ENCODE measurements at regions of chr19 and their contacts with region 1.

Region 1: GRCh38 chr19:6801485-6802086 is 29.1 kb downstream of the VAV1 start:
- DNase-seq: peak; percentile 85
- H3K4me3 Mint-ChIP-seq: peak overlapping the region; percentile 81
- H3K27ac Mint-ChIP-seq: peak overlapping the region; percentile 99
- H3K4me1 Mint-ChIP-seq: peaks cover 33% of the 10 kb centered on the region
- H3K27me3 Mint-ChIP-seq: no peaks in the 10 kb centered on the region
- CTCF ChIP-seq: no peak

Region 2: DNA sequence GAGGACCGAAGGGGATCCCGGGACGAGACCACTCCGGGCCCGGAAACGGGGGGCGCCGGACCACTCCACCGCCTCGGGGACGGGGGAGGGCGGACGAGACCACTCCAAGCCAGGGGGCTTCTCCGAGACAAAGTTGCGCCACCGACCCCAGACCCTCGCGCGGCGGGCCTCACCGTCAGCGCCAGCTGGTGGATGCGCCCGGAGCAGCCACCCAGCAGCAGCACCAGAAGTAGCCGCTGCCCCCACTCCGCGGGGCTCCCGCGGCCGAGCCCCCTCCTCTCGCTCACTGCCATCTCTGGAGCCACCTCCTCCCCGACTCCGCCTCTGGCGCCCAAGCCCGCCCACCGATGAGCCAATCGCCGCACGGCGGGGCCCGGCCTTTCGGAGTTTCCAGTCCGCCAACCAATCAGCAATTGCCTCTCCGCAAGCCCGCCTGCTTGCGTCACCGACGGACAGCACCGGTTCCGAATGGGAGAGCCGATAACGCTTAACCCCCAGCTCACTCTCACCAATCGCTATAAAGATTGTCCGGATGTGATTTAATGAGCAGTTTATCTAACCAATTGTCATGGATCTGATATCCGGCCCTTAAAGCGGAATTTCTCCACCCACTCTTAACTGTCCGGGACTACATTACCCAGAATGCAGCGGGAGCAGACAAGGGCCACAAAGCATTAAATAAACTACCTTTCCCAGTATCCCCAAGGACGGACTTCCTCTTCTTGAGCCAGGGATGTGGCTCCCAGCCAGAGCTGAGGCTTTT is 64.1 kb before region 1 on chr19 and contains the start of gene GPR108:
- CTCF ChIA-PET with region 1: interaction called, 6 read pairs
- intact Hi-C with region 1: loop called (anchors 10 kb)
- DNase-seq: peak; percentile 98
- H3K4me3 Mint-ChIP-seq: peak within 1 kb of the TSS; percentile 88
- H3K27ac Mint-ChIP-seq: peak within 1 kb of the TSS; percentile 97
- H3K4me1 Mint-ChIP-seq: peaks cover 21% of the 10 kb centered on the region
- H3K27me3 Mint-ChIP-seq: no peaks in the 10 kb centered on the region
- CTCF ChIP-seq: no peak
- total RNA-seq, gene GPR108: 67.7 and 69.0 TPM in 2 replicates

Region 3: DNA sequence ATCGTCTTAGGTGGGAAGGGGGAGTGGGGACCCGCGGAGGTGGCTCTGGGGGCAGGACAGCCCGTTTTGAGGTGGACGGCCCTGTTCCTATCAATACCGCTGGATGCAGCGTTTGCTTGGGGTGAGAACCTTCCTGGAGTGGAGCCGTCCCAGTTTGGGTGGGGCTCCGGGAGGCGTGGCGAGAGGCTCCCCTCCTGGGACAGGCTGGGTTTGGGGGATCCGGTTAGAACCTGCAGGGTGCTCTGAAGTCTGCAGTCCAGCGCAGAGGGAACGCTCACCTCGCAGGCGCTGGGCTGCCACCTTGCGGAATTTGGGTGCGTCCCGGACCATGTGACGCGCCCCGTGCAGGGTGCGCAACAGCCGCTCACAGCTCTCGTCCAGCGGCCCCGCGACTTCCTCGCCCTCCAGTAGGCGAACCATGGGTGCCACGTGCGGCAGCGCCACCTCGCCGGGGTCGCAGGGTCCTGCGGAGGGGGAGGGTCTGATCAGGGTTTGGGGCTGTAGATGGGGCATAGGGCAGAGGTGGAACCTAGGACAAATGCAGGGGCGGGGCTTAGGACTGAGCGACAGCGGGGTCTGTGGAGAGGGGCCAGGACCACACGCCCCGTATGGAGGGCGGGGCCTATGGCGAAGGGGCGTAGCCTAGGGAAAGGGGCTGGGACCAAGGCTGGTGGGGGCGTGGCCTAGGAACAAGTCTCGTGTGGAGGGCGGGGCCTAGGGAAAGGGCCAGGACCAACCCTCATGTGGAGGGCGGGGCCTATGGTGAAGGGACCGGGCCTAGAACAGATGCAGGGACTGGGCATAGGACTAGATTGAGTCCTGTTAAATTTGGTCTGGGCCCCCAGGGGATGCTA is 48.2 kb before region 1 on chr19:
- CTCF ChIA-PET with region 1: no interaction called
- intact Hi-C with region 1: no loop called
- DNase-seq: peak; percentile 72
- H3K4me3 Mint-ChIP-seq: peak overlapping the region; percentile 50
- H3K27ac Mint-ChIP-seq: peak overlapping the region; percentile 77
- H3K4me1 Mint-ChIP-seq: peaks cover 9% of the 10 kb centered on the region
- H3K27me3 Mint-ChIP-seq: no peaks in the 10 kb centered on the region
- CTCF ChIP-seq: no peak

Region 4: GRCh38 chr19:6767357-6768235 is 34.0 kb before region 1 on chr19 and contains the start of gene SH2D3A:
- CTCF ChIA-PET with region 1: interaction called, 3 read pairs
- intact Hi-C with region 1: loop called (anchors 2 kb)
- DNase-seq: peak; percentile 95
- H3K4me3 Mint-ChIP-seq: peak within 1 kb of the TSS; percentile 78
- H3K27ac Mint-ChIP-seq: peak within 1 kb of the TSS; percentile 94
- H3K4me1 Mint-ChIP-seq: peaks cover 12% of the 10 kb centered on the region
- H3K27me3 Mint-ChIP-seq: no peaks in the 10 kb centered on the region
- CTCF ChIP-seq: no peak
- total RNA-seq, gene SH2D3A: 62.0 and 64.0 TPM in 2 replicates